ENCODE measurements at regions of chr7 and their contacts with region 1.

Region 1: GRCh38 chr7:87416682-87417587 is 58.5 kb downstream of the ABCB4 start:
- DNase-seq: peak; percentile 73
- ATAC-seq: peak; percentile 68

Region 2: GRCh38 chr7:87312215-87312865 is 104.6 kb before region 1 on chr7:
- intact Hi-C with region 1: loop called (anchors 5 kb)
- DNase-seq: peak; percentile 72
- ATAC-seq: peak; percentile 78